MCF 10A (cell line): ENCODE measurements at regions of chr1 and their contacts with region 1.

Region 1: GRCh38 chr1:198465201-198466144 is 75.0 kb downstream of the ATP6V1G3 start:
- DNase-seq: peak; percentile 79
- H3K4me3 Mint-ChIP-seq: no peak overlapping the region
- H3K27ac Mint-ChIP-seq: peak overlapping the region; percentile 74
- H3K4me1 Mint-ChIP-seq: peaks cover 32% of the 10 kb centered on the region
- H3K27me3 Mint-ChIP-seq: no peaks in the 10 kb centered on the region
- CTCF ChIP-seq: peak; percentile 84

Region 2: DNA sequence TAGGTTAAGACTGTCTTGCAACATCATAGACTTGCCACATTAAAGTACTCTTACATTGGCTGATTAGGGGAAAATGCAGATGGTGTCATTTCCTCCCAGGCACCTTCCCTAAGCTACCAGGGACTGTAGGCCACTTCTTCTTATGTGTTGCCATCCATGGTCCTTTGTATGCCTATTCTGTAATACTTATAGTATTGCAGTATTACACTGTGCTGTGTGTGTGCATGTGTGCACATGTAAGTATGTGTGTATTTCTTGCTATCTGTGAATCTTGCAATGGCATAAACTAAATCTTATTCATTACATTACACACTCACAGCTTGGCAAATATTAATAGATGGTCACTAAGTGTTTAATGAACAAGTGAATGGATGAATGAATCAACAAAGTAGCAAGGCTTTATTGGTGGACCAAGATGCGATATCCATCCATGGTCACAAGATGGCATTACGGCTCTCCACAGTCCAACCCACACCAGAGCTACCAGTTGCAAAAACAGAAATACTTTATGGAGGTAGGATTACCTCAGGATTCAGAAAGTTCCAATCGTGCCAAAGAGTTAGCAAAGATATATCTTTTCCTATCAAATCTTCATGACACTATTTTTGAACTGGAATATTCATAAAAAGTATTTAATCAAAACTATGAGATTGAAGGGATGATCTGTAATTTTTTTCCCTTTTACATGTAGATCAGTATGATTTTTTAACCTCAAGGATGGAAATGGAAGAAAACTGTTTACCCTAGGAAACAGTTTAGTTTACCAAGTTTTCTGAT is 850.4 kb before region 1 on chr1:
- CTCF ChIA-PET with region 1: interaction called, 14 read pairs
- POLR2A ChIA-PET with region 1: no interaction called
- intact Hi-C with region 1: loop called (anchors 1 kb)
- DNase-seq: peak; percentile 67
- H3K4me3 Mint-ChIP-seq: no peak overlapping the region
- H3K27ac Mint-ChIP-seq: no peak overlapping the region
- H3K4me1 Mint-ChIP-seq: no peaks in the 10 kb centered on the region
- H3K27me3 Mint-ChIP-seq: no peaks in the 10 kb centered on the region
- CTCF ChIP-seq: peak; percentile 82

Region 3: DNA sequence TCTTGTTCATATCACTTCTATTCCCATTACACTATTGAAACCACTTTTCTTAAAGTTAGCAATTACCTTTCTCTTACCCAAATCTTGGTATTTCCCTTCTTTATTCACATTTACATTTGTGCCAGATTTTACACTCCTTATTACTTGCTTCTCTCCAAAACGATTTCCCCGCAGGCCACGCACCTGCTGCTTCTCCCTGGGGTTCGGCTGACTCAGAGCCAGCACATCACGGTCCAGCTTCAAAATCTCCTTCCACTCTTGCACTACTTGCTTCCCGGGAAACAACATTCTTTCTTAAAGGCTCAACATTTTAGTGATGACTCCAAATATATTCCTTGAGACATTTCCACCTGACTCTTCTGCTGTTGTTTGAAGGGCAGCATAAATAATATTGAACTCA is 527.6 kb before region 1 on chr1:
- CTCF ChIA-PET with region 1: no interaction called
- POLR2A ChIA-PET with region 1: no interaction called
- intact Hi-C with region 1: loop called (anchors 2 kb)
- DNase-seq: no peak
- H3K4me3 Mint-ChIP-seq: no peak overlapping the region
- H3K27ac Mint-ChIP-seq: no peak overlapping the region
- H3K4me1 Mint-ChIP-seq: no peaks in the 10 kb centered on the region
- H3K27me3 Mint-ChIP-seq: no peaks in the 10 kb centered on the region
- CTCF ChIP-seq: no peak

Region 4: DNA sequence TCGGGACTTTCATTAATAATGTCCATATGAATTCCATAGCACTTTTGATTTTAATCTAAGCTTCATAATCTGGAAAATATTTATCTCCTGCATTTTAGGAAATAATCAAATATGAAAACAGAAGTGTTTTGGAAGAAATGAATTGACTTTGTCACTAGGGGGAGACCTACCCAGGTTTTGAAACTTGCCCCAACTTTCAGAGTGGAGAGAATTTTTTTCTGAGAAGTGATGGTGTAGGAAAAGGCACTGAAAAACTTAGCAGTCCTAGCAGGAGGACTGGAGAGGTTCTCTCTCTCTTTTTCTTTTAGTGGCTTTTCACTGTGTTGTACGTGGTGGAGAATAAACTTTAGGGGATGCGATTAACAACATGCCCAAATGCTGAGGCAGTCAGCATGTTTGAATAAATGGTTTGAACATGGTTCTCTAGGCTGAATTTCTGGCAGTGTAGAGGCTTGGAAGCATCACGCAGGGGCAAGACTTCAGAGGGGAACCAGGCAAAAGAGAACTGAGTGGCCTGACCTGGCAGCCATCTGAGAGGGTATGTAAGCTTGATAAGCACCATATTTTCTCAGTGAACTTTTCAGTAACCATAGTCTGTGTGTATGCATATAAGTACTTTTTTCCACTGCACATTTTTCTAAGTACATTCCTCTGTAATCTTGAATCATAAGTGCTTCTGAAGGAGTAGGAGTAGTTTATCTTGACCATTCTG is 377.0 kb before region 1 on chr1:
- CTCF ChIA-PET with region 1: interaction called, 15 read pairs
- POLR2A ChIA-PET with region 1: interaction called, 3 read pairs
- intact Hi-C with region 1: loop called (anchors 1 kb)
- DNase-seq: peak; percentile 64
- H3K4me3 Mint-ChIP-seq: no peak overlapping the region
- H3K27ac Mint-ChIP-seq: no peak overlapping the region
- H3K4me1 Mint-ChIP-seq: peaks cover 7% of the 10 kb centered on the region
- H3K27me3 Mint-ChIP-seq: no peaks in the 10 kb centered on the region
- CTCF ChIP-seq: peak; percentile 71

Region 5: GRCh38 chr1:198359024-198359653 is 106.3 kb before region 1 on chr1:
- CTCF ChIA-PET with region 1: interaction called, 3 read pairs
- POLR2A ChIA-PET with region 1: no interaction called
- intact Hi-C with region 1: loop called (anchors 2 kb)
- DNase-seq: peak; percentile 62
- H3K4me3 Mint-ChIP-seq: no peak overlapping the region
- H3K27ac Mint-ChIP-seq: no peak overlapping the region
- H3K4me1 Mint-ChIP-seq: peaks cover 10% of the 10 kb centered on the region
- H3K27me3 Mint-ChIP-seq: no peaks in the 10 kb centered on the region
- CTCF ChIP-seq: peak; percentile 75

Region 6: DNA sequence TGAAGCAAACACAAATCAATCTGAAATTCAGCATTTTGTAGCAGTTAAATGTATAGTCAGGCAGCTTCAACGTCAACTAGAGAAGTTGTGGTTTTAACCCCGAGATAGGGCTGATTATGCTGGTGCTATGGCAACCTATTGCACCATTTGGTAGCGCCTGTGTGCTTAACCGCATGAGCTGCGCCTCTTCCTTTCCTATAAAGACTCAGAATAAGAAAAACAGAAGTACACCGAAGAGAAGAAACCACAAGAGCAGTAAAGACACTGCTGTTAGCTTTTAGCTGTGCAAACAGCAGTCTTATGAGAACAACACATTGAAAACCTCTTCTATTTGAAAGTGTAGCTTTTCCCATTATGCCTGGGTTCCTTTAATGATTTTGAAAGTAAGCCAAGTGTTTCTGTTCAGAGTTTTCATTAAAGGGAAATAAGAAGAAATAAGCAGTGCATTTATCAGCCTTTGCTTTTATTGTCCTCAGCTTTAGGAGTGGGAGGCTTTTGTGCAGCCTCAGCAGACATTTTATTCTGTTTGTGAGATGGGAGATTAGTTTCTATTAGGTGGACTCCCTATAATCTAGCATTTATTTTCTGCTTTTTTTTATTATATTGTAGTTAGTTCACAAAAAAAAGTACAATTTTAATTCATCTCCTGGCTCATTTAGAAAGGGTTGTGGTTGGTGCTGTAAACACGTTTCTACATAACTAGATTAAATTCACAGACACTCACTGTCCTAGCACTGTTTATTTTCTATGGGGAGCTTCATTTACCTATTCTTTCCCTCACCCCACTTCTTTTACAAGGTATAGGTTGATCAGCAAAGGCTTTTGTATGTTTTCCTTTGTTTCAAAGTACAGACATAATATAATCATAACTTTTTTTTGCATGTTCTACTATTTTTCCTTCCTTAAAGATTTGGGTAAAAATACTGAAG is 216.6 kb after region 1 on chr1:
- CTCF ChIA-PET with region 1: interaction called, 33 read pairs
- POLR2A ChIA-PET with region 1: interaction called, 8 read pairs
- intact Hi-C with region 1: loop called (anchors 2 kb)
- DNase-seq: peak; percentile 94
- H3K4me3 Mint-ChIP-seq: peak overlapping the region; percentile 67
- H3K27ac Mint-ChIP-seq: peak overlapping the region; percentile 96
- H3K4me1 Mint-ChIP-seq: peaks cover 25% of the 10 kb centered on the region
- H3K27me3 Mint-ChIP-seq: no peaks in the 10 kb centered on the region
- CTCF ChIP-seq: no peak